ENCODE measurements at regions of chr3 and their contacts with region 1.

Region 1: DNA sequence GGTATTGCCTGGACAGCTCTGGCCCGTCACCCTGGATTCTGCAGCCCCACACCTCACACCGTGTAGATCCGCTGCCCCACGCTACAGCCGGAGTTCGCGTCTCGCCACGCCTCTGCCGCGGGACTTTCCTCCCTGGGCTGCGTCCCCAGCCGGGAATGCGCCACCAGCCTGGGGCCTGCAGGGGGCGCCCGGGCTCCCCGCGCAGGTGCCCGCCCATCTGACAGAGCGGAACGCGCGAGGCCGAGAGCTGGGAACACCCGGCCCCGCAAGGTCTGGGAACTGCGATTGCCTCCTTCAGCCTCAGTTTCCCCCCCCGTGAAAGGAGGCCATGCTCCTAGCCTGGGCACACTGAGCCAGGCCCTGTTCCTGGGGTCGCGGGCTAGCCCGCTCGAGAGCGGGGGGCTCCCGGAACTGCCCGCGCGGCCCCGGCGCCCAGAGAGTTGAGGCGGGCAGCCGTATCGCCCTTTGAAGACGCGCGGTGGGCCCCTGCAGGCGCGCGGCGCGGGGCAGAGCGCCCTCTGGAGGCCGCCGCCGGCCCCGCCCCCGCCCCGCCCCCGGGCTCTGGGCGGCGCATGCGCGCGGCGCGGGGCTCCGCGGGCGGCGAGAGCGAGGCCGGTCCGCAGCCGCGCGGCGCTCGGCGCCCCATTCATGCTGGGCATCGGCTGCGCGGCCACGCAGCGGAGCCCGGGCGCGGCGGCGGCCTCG is at the start of gene PLXNA1:
- DNase-seq: peak; percentile 58
- H3K4me3 ChIP-seq: peak within 1 kb of the TSS; percentile 60 to 95 (median 68)
- H3K27ac ChIP-seq: peak within 1 kb of the TSS; percentile 83 to 93 (median 86)
- H3K4me1 ChIP-seq: peaks cover 23 to 55% (median 23%) of the 10 kb centered on the region in 3 donors
- H3K27me3 ChIP-seq: peaks cover 0 to 13% (median 0%) of the 10 kb centered on the region in 4 donors
- CTCF ChIP-seq: peak; percentile 86 to 97 (median 94)
- POLR2A ChIP-seq: peak in 1 of 4 donors; percentile 38
- total RNA-seq, gene PLXNA1: 19.7 to 27.5 (median 23.9) TPM

Region 2: DNA sequence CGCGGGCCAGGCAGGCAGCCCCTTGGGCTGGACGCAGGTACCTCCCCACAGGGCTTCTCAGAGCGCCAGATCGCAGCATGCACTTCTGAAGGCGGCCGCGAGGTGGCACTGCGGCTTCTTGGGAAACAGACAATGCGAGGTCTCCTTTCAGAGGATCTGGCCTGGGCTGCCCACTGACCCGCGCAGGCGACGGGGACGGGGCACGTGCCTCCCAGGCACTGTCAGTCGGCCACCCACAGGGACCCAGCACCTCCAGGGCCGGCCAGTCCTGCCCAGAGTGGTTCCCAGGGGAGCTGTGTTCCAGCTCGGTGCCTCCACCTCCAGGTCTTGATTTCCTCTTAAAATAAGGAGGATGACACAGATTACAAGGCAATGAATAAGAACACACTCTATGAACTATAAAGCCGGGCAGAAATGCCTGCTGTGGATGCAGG is 303.3 kb before region 1 on chr3:
- intact Hi-C with region 1: loop called (anchors 10 kb)
- DNase-seq: peak; percentile 11
- H3K4me3 ChIP-seq: no peak overlapping the region
- H3K27ac ChIP-seq: no peak overlapping the region
- H3K4me1 ChIP-seq: peaks cover 0 to 24% (median 0%) of the 10 kb centered on the region in 3 donors
- H3K27me3 ChIP-seq: peaks cover 0 to 37% (median 0%) of the 10 kb centered on the region in 4 donors
- CTCF ChIP-seq: peak; percentile 77 to 99 (median 89)
- POLR2A ChIP-seq: no peak

Region 3: GRCh38 chr3:127074728-127075360 is 92.2 kb after region 1 on chr3:
- intact Hi-C with region 1: no loop called
- DNase-seq: no peak
- H3K4me3 ChIP-seq: no peak overlapping the region
- H3K27ac ChIP-seq: peak overlapping the region; percentile 58 to 86 (median 74)
- H3K4me1 ChIP-seq: peaks cover 17 to 67% (median 42%) of the 10 kb centered on the region in 3 donors
- H3K27me3 ChIP-seq: peaks cover 0 to 7% (median 0%) of the 10 kb centered on the region in 4 donors
- CTCF ChIP-seq: no peak
- POLR2A ChIP-seq: no peak

Region 4: DNA sequence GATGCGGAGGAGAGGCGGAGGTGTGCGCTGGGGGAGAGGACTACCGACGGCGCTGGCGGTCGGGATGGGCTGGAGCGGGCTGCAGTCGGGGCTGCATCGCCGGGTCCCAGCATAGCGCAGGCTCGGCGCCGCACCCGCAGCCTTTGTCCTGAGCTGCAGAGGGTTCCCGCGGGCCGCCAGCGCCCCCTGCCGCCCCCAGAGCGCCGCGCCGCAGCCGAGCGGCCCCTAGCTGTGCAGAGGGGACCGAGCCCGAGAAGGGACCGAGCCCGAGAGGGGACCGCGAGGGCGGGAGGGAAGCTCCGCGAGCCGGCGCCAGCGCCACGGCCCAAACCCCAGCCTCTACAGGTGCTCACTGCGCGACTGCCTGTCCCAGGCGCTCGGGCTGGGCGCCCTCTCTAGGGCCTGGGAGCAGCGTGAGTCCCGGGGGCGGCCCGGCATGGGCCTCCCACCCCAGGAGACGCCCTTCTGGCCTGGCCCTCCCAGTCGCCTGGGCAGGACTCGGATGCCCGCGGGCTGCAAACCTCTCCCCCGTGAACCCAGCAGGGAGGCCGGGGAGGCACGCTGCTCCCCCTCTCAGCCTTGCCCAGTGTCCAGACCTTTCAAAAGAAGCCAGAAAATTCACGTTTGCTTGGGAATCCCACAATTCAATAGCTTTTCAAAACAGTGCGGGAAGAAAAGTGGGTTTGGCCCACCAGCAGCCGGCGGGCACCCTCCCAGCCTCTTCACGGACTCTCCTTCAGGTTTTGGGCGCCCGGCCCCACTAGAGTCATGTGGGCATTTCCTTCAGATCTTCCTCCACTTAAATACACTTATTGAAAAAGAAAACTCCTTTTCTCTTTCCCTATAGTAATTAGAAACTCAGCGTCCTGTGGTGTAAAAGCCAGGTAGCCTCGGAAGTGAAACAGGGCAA is 473.2 kb after region 1 on chr3:
- intact Hi-C with region 1: loop called (anchors 10 kb)
- DNase-seq: no peak
- H3K4me3 ChIP-seq: peak overlapping the region in 3 of 4 donors; percentile 16 to 56 (median 30)
- H3K27ac ChIP-seq: no peak overlapping the region
- H3K4me1 ChIP-seq: peaks cover 19 to 36% (median 20%) of the 10 kb centered on the region in 3 donors
- H3K27me3 ChIP-seq: peaks cover 0 to 85% (median 7%) of the 10 kb centered on the region in 4 donors
- CTCF ChIP-seq: peak; percentile 77 to 93 (median 88)
- POLR2A ChIP-seq: no peak